Gastrocnemius medialis (tissue), 4 donors: ENCODE measurements at regions of chr2 and their contacts with region 1.

Region 1: DNA sequence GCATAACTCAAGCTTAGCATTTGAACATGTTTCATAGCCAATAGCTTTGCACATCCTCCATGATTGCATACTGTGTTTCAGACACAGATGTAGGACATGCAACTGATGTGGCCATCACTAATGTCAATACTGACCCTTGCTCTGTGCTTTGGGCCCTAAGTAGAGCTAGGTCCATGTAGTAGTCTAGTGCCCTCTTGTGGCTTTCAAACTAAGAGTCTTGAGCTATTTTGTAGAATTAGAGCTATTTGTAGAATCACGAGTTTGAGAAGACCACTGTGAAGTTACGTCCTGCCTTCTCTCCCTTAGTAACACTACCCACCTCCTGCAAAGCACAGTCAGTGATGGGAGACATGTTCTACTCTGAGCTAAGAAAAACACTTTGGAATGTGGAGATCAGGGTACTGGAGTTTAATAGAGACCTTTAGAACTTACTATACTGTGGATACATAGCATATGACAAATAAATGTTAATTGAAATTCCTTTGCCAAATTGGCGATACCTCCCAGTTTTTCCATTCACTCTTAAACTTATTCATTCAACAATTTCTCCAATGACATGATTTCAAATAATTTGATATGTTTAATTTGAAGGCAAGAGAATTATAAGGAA is 306.5 kb upstream of the TNP1 start:
- DNase-seq: no peak
- ATAC-seq: peak in 1 of 2 donors; percentile 71
- H3K4me3 ChIP-seq: no peak overlapping the region
- H3K27ac ChIP-seq: no peak overlapping the region
- H3K4me1 ChIP-seq: peaks cover 16 to 32% of the 10 kb centered on the region in 2 donors
- H3K27me3 ChIP-seq: no peaks in the 10 kb centered on the region
- CTCF ChIP-seq: peak; percentile 63 to 71 (median 64)
- POLR2A ChIP-seq: no peak

Region 2: GRCh38 chr2:216519154-216519762 is 647.1 kb before region 1 on chr2:
- in situ Hi-C with region 1: loop called in 1 of 4 experiments (anchors 25 kb)
- intact Hi-C with region 1: no loop called
- DNase-seq: peak; percentile 36 to 48
- ATAC-seq: peak; percentile 82 to 93
- H3K4me3 ChIP-seq: no peak overlapping the region
- H3K27ac ChIP-seq: no peak overlapping the region
- H3K4me1 ChIP-seq: peaks cover 0 to 4% of the 10 kb centered on the region in 2 donors
- H3K27me3 ChIP-seq: no peaks in the 10 kb centered on the region
- CTCF ChIP-seq: peak; percentile 69 to 79 (median 75)
- POLR2A ChIP-seq: no peak

Region 3: GRCh38 chr2:216679221-216680019 is 486.9 kb before region 1 on chr2:
- in situ Hi-C with region 1: no loop called
- intact Hi-C with region 1: loop called (anchors 1 kb)
- DNase-seq: peak; percentile 84 to 92
- ATAC-seq: peak; percentile 58 to 59
- H3K4me3 ChIP-seq: peak overlapping the region in 2 of 4 donors; percentile 8 to 26
- H3K27ac ChIP-seq: peak overlapping the region; percentile 93 to 95 (median 93)
- H3K4me1 ChIP-seq: peaks cover 55 to 57% of the 10 kb centered on the region in 2 donors
- H3K27me3 ChIP-seq: no peaks in the 10 kb centered on the region
- CTCF ChIP-seq: no peak
- POLR2A ChIP-seq: peak; percentile 54 to 55

Region 4: DNA sequence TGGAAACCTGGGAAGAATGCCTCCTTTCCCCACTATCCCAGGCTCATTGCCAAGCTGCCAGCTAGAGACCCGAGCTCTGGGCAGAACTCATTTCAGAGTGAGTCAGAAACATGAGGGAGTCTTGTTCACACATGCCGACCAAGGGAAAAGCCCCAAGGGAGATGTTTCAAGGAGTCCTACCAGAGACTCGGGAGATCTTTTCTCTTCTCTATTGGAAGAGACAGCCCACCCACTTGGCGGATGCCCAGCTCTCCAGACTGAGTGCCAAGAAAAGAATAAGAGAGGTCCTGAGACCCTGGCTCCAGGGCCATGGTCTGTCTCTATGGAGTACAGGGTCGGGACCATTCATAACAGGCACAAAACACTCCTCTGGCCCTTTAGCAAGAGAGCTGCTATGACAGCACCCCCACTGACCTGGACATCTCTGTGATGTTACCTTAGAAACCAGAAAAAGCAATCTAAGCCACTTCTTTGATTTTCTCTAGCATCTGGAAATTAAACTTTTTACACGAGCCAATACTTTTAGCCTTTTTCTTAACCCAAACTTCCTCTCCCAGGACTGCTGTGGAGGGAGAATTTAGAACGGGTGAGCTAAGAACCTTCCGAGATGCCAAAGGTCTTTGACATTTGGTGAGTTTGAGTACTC is 452.5 kb before region 1 on chr2:
- in situ Hi-C with region 1: loop called in 2 of 4 experiments (anchors 10 to 25 kb)
- intact Hi-C with region 1: no loop called
- DNase-seq: no peak
- ATAC-seq: peak; percentile 31 to 51
- H3K4me3 ChIP-seq: no peak overlapping the region
- H3K27ac ChIP-seq: peak overlapping the region; percentile 23 to 68 (median 51)
- H3K4me1 ChIP-seq: peaks cover 13 to 22% of the 10 kb centered on the region in 2 donors
- H3K27me3 ChIP-seq: no peaks in the 10 kb centered on the region
- CTCF ChIP-seq: no peak
- POLR2A ChIP-seq: no peak

Region 5: GRCh38 chr2:216807857-216808272 is 358.5 kb before region 1 on chr2:
- in situ Hi-C with region 1: no loop called
- intact Hi-C with region 1: loop called (anchors 10 kb)
- DNase-seq: peak; percentile 74 to 83
- ATAC-seq: peak in 1 of 2 donors; percentile 14
- H3K4me3 ChIP-seq: no peak overlapping the region
- H3K27ac ChIP-seq: peak overlapping the region; percentile 78 to 98 (median 86)
- H3K4me1 ChIP-seq: peaks cover 53 to 62% of the 10 kb centered on the region in 2 donors
- H3K27me3 ChIP-seq: no peaks in the 10 kb centered on the region
- CTCF ChIP-seq: no peak
- POLR2A ChIP-seq: no peak